Ovary (tissue), 10 donors: ENCODE measurements at regions of chr5 and their contacts with region 1.

Region 1: DNA sequence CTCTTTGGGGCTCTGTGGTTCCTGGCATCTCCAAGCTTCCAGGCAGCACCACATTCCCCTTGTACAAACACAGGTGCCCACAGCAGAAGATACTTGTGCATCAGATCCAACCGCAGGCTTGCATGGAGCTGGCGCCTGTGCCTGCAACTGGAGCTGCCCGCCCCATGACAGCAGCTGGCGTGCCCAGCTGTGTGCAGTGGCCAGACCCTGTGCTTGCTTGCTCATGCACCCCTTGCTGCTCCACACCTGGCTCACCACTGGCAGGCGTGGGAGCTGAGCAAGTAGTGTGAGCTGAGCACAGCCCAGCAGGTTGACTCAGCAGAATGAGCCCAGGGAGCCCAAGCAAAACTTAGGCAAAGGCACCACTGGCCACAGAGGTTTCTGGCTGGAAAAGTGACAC is 84.4 kb upstream of the STARD4 start:
- DNase-seq: no peak
- H3K4me3 ChIP-seq: no peak overlapping the region
- H3K27ac ChIP-seq: no peak overlapping the region
- H3K4me1 ChIP-seq: no peaks in the 10 kb centered on the region
- H3K27me3 ChIP-seq: no peaks in the 10 kb centered on the region
- CTCF ChIP-seq: no peak
- EP300 ChIP-seq: no peak
- POLR2A ChIP-seq: no peak

Region 2: DNA sequence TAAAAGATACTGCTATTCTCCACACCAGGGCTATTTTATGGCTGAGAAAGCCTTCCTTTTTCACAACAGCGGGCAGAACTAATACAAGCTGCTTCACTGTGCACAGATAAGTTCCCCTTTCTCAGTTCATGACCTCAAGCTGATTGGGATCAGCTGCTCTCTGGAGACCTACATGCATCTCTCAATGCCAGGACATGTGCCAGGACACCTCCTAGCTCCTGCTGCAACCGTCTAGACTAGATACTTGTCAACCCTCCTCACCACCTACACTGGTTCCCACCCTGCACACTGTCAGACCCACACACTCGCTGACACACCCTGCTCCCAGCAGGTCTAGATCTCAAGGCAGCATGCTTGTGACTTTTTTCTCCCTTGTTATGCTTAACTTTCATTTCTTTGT is 124.1 kb before region 1 on chr5:
- intact Hi-C with region 1: loop called in 1 of 4 experiments (anchors 5 kb)
- DNase-seq: no peak
- H3K4me3 ChIP-seq: no peak overlapping the region
- H3K27ac ChIP-seq: no peak overlapping the region
- H3K4me1 ChIP-seq: no peaks in the 10 kb centered on the region
- H3K27me3 ChIP-seq: no peaks in the 10 kb centered on the region
- CTCF ChIP-seq: no peak
- EP300 ChIP-seq: no peak
- POLR2A ChIP-seq: no peak

Region 3: GRCh38 chr5:111563031-111563822 is 33.5 kb before region 1 on chr5:
- intact Hi-C with region 1: no loop called
- DNase-seq: no peak
- H3K4me3 ChIP-seq: no peak overlapping the region
- H3K27ac ChIP-seq: no peak overlapping the region
- H3K4me1 ChIP-seq: no peaks in the 10 kb centered on the region
- H3K27me3 ChIP-seq: no peaks in the 10 kb centered on the region
- CTCF ChIP-seq: no peak
- EP300 ChIP-seq: no peak
- POLR2A ChIP-seq: no peak